Motor neuron (in vitro differentiated cells): ENCODE measurements at regions of chr5 and their contacts with region 1.

Region 1: DNA sequence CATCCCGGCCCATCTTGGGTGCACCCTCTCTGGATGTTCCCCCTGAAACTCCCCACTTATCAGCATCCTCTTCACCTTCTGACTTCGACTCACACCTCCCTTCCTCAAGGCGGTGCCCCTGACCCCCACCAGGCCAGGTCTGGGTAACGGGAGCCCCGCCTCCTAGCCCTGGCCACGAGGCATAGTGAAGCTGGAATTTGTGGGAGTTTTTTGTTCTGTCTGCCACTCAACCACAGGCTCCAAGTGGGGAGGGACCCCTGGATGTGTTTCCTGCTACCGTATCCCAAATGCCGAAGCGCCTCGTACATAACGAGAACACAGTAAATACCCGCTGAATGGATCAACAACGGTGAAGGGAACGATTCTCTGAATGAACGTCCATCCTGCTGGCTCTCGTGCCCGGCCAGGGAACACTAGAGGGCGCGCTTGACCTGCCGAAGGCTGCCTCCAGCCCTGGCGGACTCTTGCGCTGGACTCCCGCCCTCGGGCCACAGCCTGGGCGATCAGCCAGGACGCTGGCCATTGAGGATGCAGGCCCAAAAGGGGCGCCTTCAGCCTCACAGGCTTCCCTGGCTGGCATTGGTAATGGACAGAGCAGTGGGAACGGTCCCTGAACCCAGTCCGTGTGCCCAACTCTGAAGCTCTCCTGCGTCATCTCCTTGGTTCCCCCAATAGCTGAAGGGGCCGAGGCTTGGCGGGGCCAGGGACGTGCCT is 47.3 kb upstream of the PHYKPL start:
- ATAC-seq: peak; percentile 96 to 100 (median 98)
- H3K4me3 ChIP-seq: no peak overlapping the region
- H3K27ac ChIP-seq: no peak overlapping the region
- H3K4me1 ChIP-seq: no peaks in the 10 kb centered on the region

Region 2: DNA sequence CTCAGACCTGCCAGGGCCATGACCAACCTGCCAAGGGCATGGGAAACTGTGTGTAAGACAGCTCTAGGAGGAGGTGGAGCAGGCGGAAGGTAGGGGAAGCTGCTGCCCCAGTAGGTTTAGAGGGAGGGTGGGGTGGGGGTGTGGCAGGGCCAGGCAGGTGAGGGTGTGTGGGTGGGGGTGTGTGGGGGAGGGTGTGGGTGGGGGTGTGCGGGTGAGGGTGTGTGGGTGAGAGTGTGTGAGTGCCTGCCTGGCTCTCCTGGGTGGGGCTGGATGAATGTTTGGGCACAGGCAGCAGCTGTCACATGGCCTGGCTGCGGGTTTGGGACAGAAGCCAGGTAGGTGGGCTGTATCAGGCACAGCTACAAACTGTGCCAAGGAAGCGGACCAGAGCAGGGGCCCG is 175.4 kb before region 1 on chr5:
- in situ Hi-C with region 1: no loop called
- ATAC-seq: no peak
- H3K4me3 ChIP-seq: no peak overlapping the region
- H3K27ac ChIP-seq: no peak overlapping the region
- H3K4me1 ChIP-seq: peaks cover 6 to 10% of the 10 kb centered on the region in 2 donors

Region 3: DNA sequence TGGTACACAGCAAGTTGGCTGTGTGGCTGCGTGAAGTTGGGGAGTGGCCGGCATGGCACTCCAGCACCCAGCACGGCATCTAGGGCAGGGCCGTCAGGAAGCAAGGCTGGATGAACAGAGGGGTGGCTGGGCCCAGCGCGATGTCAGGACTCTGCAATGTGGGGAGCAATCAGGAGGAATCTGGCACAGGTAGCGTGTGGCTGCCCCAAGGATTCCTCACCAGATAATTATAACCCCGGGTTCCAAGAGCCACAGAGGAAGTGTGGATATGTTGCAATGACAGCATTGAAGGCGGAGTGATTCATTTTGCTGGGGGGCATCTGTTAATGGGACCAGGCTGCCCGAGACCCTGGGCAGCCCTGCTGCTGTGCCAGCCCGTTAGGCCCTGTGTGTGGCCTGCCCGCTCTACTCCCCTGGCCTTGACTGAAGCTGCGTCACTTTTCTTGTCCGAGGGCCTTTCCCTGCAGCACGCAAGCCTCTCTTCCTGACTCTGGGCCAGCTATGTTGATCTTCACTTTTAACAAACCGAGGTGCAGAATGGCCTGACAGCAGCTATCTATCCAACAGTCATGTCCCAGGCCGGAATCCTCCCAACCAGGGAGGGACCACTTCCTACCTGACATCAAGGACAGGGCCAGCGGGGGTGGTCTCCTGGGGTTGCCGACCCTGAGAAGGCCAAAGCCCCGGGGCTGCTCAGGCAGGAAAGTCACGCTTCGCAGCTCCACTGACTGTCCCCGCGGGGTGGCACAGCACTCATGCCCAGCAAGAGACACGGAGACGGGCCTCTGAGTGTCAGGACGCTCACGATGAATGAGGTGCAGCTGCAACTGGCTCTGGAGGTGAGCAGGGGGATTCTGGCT is 70.7 kb after region 1 on chr5:
- in situ Hi-C with region 1: no loop called
- ATAC-seq: no peak
- H3K4me3 ChIP-seq: no peak overlapping the region
- H3K27ac ChIP-seq: no peak overlapping the region
- H3K4me1 ChIP-seq: peaks cover 0 to 7% of the 10 kb centered on the region in 2 donors

Region 4: GRCh38 chr5:178551059-178551458 is 271.2 kb after region 1 on chr5:
- in situ Hi-C with region 1: loop called in 5 of 9 experiments (anchors 5 to 25 kb)
- ATAC-seq: peak in 1 of 8 experiments; percentile 19
- H3K4me3 ChIP-seq: no peak overlapping the region
- H3K27ac ChIP-seq: no peak overlapping the region
- H3K4me1 ChIP-seq: no peaks in the 10 kb centered on the region

Region 5: DNA sequence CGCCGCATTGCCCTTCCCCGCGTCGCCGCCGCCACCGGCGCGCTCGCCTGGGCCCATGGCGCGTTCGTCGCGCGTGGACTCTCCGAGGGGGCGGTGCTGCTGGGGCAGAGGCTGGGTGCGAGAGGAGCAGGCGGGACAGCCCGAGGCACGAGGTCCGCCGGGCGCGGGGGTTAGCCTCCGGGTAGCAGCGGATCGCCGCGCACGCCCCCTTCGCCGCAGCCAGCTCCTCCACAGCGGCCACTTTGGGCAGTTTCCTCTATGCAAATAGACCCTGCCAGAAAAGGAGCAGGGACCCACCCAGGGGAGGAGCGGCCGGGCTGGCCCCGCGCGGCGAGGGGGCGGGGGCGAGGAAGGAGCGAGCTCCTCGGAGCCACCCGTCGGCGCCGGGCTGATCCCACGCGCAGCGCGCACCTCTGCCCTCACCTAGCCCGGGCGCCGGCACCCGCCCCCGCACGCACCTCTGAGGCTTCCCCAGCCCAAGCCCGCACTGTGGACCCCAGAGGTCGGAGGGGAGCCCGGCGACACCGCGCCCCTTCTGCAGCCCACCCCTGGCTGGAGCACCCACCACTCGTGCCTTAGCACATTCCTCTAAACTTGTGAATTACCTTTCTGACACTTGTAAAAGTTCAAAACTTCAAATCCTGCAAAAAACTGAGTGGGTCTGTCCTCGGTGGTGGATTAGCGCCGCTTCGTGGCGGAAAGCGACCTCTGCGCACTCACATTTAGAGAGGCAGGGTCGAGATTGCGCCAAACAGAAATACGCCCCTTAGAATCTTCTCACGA is 310.4 kb after region 1 on chr5 and contains the start of gene COL23A1:
- in situ Hi-C with region 1: loop called in 4 of 9 experiments (anchors 25 kb)
- ATAC-seq: peak; percentile 76 to 91 (median 86)
- H3K4me3 ChIP-seq: peak within 1 kb of the TSS; percentile 26 to 38 (median 36)
- H3K27ac ChIP-seq: no peak within 1 kb of the TSS
- H3K4me1 ChIP-seq: peaks cover 4 to 25% of the 10 kb centered on the region in 2 donors
- total RNA-seq, gene COL23A1: 0.10 to 10.8 (median 0.20) TPM

Region 6: DNA sequence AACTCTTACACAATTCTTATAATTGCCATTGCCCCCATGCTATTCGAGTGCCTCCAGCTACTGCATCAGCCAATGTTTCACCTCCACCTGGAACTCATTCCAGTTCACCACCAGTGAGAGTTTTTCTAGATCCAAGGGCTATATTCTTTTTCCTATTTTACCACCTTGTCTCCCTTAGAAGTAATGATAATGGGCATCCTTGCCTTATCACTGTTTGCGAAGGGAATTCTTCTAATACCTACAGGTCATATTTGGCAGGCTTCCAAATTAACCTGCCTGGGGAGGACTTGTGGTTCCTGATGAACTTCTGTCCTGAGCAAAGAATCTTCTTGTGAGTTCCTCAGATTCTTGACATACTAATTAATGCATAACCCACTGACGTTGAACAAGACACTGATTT is 355.3 kb after region 1 on chr5:
- in situ Hi-C with region 1: no loop called
- ATAC-seq: no peak
- H3K4me3 ChIP-seq: no peak overlapping the region
- H3K27ac ChIP-seq: no peak overlapping the region
- H3K4me1 ChIP-seq: no peaks in the 10 kb centered on the region